ENCODE measurements at regions of chr19 and their contacts with region 1.

Region 1: GRCh38 chr19:11125994-11126685 is 29.4 kb downstream of the SPC24 start:
- DNase-seq: peak; percentile 57 to 81 (median 64)
- ATAC-seq: peak; percentile 83
- H3K4me3 ChIP-seq: no peak overlapping the region
- H3K27ac ChIP-seq: no peak overlapping the region; the same call in 2 of the 3 replicates
- H3K4me1 ChIP-seq: peaks cover 0 to 4% of the 10 kb centered on the region in 2 experiments; a peak in 2 of 5 replicates
- H3K27me3 ChIP-seq: no peaks in the 10 kb centered on the region
- CTCF ChIP-seq: peak; percentile 64 to 77 (median 69)
- EP300 ChIP-seq: no peak
- POLR2A ChIP-seq: peak; percentile 6
- RAD21 ChIP-seq: peak; percentile 25 to 38

Region 2: GRCh38 chr19:10936661-10937084 is 189.5 kb before region 1 on chr19:
- CTCF ChIA-PET with region 1: interaction called, 3 read pairs
- POLR2A ChIA-PET with region 1: no interaction called
- in situ Hi-C with region 1: no loop called
- intact Hi-C with region 1: loop called (anchors 5 kb)
- DNase-seq: peak; percentile 60 to 83 (median 72)
- ATAC-seq: peak; percentile 83
- H3K4me3 ChIP-seq: no peak overlapping the region
- H3K27ac ChIP-seq: no peak overlapping the region
- H3K4me1 ChIP-seq: peaks cover 18 to 20% of the 10 kb centered on the region in 2 experiments
- H3K27me3 ChIP-seq: no peaks in the 10 kb centered on the region
- CTCF ChIP-seq: peak; percentile 67 to 79 (median 72)
- EP300 ChIP-seq: no peak
- POLR2A ChIP-seq: no peak
- RAD21 ChIP-seq: peak; percentile 54 to 73

Region 3: DNA sequence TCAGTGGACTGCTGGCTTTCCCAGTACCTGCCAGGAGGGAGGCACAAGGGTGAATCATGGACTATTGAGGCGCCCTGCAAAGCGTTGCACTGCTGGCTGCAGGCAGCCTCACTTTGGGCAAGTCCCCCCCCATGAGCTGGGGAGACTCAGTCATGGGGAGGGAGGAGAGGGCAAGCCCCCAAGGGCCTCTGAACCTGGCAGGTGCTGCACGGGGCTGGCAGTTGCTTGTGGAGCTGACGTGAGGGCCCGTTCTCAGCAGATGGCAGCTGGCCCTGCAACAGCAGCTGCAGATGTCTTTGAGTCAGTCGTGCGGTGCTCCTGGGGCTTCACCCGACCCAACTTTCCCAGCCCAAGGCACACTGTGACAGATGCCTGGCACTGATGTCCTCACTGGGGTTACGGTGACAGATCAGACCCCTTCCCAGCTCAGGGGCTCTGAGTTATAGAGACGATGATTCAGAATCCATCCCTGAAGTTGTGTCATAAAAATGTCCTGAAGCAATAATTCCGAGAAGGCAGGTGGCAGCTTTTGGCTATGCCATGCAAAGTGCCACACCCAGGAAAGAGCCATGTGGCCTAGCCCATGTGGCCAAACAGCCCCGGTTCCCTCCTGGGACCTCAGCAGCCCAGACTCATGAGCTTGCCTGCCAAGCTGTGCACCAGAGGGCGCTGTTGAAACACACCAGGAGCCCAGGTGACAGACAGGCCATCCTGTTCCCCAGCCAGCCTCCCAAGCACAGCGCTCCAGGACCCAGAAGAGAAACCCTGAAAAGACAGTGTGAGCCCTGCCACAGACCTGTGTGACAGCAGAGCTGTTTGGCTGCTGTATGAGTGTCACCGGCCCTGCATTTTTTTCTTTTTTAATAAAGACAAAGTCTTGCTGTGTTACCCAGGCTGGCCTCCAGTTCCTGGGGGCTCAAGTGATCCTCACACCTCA is 90.4 kb before region 1 on chr19:
- CTCF ChIA-PET with region 1: interaction called, 4 read pairs
- POLR2A ChIA-PET with region 1: interaction called, 7 read pairs
- in situ Hi-C with region 1: no loop called
- intact Hi-C with region 1: loop called (anchors 5 kb)
- DNase-seq: peak; percentile 77 to 92 (median 86)
- ATAC-seq: peak; percentile 99
- H3K4me3 ChIP-seq: no peak overlapping the region
- H3K27ac ChIP-seq: no peak overlapping the region
- H3K4me1 ChIP-seq: peaks cover 0 to 13% of the 10 kb centered on the region in 2 experiments; a peak in 1 of 5 replicates
- H3K27me3 ChIP-seq: no peaks in the 10 kb centered on the region
- CTCF ChIP-seq: peak; percentile 86 to 93 (median 89)
- EP300 ChIP-seq: no peak
- POLR2A ChIP-seq: no peak
- RAD21 ChIP-seq: peak; percentile 85 to 91

Region 4: GRCh38 chr19:11064831-11065303 is 61.3 kb before region 1 on chr19:
- CTCF ChIA-PET with region 1: no interaction called
- POLR2A ChIA-PET with region 1: no interaction called
- in situ Hi-C with region 1: no loop called
- intact Hi-C with region 1: no loop called
- DNase-seq: peak; percentile 48 to 56 (median 52)
- ATAC-seq: peak; percentile 33
- H3K4me3 ChIP-seq: no peak overlapping the region
- H3K27ac ChIP-seq: peak overlapping the region; percentile 11; the same call in 1 of the 3 replicates
- H3K4me1 ChIP-seq: peaks cover 0 to 27% of the 10 kb centered on the region in 2 experiments; a peak in 4 of 5 replicates
- H3K27me3 ChIP-seq: no peaks in the 10 kb centered on the region
- CTCF ChIP-seq: no peak
- EP300 ChIP-seq: no peak
- POLR2A ChIP-seq: no peak
- RAD21 ChIP-seq: no peak

Region 5: DNA sequence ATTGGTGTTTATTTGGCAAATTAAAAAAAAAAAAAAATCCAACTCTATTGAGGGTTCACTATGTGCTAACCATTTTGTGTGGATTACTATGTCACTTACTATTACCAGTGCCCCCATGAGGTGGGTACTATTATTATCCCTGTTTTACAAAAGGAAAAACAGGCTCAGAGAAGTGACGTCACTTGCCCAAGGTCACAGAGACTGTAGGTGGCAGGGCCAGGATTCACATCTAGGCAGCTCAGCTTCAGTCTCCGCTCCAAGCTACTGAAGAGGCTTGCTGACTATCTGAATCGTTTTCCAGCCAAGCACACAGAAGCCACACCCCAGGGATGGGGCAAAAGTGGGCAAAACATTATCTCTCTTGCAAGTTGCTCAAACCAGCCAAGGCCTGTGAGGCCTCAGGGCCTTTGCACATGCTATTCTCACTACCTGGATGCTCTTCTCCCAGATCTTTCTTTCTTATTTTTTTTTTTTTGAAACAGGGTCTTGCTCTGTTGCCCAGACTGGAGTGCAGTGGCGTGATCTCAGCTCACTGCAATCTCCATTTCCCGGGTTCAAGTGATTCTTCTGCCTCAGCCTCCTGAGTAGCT is 108.4 kb after region 1 on chr19:
- CTCF ChIA-PET with region 1: no interaction called
- POLR2A ChIA-PET with region 1: no interaction called
- in situ Hi-C with region 1: no loop called
- intact Hi-C with region 1: no loop called
- DNase-seq: no peak
- ATAC-seq: no peak
- H3K4me3 ChIP-seq: no peak overlapping the region
- H3K27ac ChIP-seq: no peak overlapping the region
- H3K4me1 ChIP-seq: peaks cover 0 to 18% of the 10 kb centered on the region in 2 experiments; a peak in 1 of 5 replicates
- H3K27me3 ChIP-seq: no peaks in the 10 kb centered on the region
- CTCF ChIP-seq: no peak
- EP300 ChIP-seq: no peak
- POLR2A ChIP-seq: no peak
- RAD21 ChIP-seq: no peak

Measured in K562 (cell line).